A673 (cell line): ENCODE measurements at regions of chr2 and their contacts with region 1.

Region 1: GRCh38 chr2:24827321-24828237 is 34.4 kb downstream of the CENPO start:
- DNase-seq: peak; percentile 90
- H3K4me3 ChIP-seq: no peak overlapping the region
- H3K27ac ChIP-seq: no peak overlapping the region
- H3K4me1 ChIP-seq: peaks cover under 1% of the 10 kb centered on the region
- H3K27me3 ChIP-seq: no peaks in the 10 kb centered on the region
- CTCF ChIP-seq: peak; percentile 96

Region 2: GRCh38 chr2:24409700-24410556 is 417.7 kb before region 1 on chr2:
- CTCF ChIA-PET with region 1: interaction called, 4 read pairs
- POLR2A ChIA-PET with region 1: no interaction called
- intact Hi-C with region 1: loop called (anchors 1 kb)
- DNase-seq: peak; percentile 83
- H3K4me3 ChIP-seq: no peak overlapping the region
- H3K27ac ChIP-seq: no peak overlapping the region
- H3K4me1 ChIP-seq: peaks cover 3% of the 10 kb centered on the region
- H3K27me3 ChIP-seq: no peaks in the 10 kb centered on the region
- CTCF ChIP-seq: peak; percentile 87

Region 3: DNA sequence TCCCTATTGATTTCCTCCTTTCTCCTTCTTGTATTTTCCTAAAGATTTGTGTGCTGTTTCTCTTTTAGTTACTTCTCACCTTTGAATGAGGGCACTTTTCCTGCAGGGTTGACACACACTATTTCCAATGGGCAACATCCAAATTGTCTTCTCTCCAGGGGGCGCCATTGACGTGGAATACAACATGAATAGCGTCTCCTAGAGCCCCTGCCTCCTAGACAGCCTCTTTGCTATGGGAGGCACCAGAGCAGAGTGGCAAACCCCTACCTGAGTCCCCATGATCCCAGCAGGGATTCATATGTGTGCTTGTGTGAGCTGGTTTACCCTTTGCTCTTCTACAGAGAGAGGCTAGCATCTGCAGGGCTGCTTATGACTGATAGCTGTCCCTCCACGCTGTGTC is 405.9 kb before region 1 on chr2:
- CTCF ChIA-PET with region 1: interaction called, 9 read pairs
- POLR2A ChIA-PET with region 1: no interaction called
- intact Hi-C with region 1: loop called (anchors 1 kb)
- DNase-seq: peak; percentile 84
- H3K4me3 ChIP-seq: no peak overlapping the region
- H3K27ac ChIP-seq: no peak overlapping the region
- H3K4me1 ChIP-seq: peaks cover 5% of the 10 kb centered on the region
- H3K27me3 ChIP-seq: no peaks in the 10 kb centered on the region
- CTCF ChIP-seq: peak; percentile 85

Region 4: GRCh38 chr2:24490674-24491625 is 336.6 kb before region 1 on chr2 and contains the start of gene NCOA1:
- CTCF ChIA-PET with region 1: interaction called, 11 read pairs
- POLR2A ChIA-PET with region 1: no interaction called
- intact Hi-C with region 1: loop called (anchors 10 kb)
- DNase-seq: peak; percentile 96
- H3K4me3 ChIP-seq: peak within 1 kb of the TSS; percentile 84
- H3K27ac ChIP-seq: peak within 1 kb of the TSS; percentile 87
- H3K4me1 ChIP-seq: peaks cover 46% of the 10 kb centered on the region
- H3K27me3 ChIP-seq: no peaks in the 10 kb centered on the region
- CTCF ChIP-seq: no peak
- total RNA-seq, gene NCOA1: 27.5 TPM in 2 replicates

Region 5: DNA sequence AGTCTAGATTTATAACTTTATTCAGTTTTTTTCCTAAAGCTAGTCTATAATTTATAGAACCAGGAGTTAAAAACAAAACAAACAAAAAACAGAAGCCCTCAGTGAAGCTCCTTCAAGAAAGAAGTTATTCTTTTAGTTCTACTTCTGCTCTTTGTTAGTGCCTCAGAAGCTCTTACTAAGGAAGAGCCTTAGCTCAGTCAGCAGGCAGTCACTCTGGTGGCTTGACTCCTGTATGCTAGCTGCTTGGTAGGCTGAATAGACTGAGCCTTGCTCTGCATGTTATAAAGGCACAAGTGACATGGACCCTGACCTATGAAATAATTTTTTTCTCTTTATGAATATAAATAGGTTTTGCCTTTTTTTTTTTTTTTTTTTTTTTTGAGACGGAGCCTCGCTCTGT is 311.7 kb before region 1 on chr2:
- CTCF ChIA-PET with region 1: no interaction called
- POLR2A ChIA-PET with region 1: no interaction called
- intact Hi-C with region 1: no loop called
- DNase-seq: peak; percentile 16
- H3K4me3 ChIP-seq: no peak overlapping the region
- H3K27ac ChIP-seq: no peak overlapping the region
- H3K4me1 ChIP-seq: peaks cover 17% of the 10 kb centered on the region
- H3K27me3 ChIP-seq: no peaks in the 10 kb centered on the region
- CTCF ChIP-seq: no peak

Region 6: GRCh38 chr2:24613154-24613814 is 214.3 kb before region 1 on chr2:
- CTCF ChIA-PET with region 1: interaction called, 4 read pairs
- POLR2A ChIA-PET with region 1: no interaction called
- intact Hi-C with region 1: loop called (anchors 2 kb)
- DNase-seq: peak; percentile 71
- H3K4me3 ChIP-seq: no peak overlapping the region
- H3K27ac ChIP-seq: no peak overlapping the region
- H3K4me1 ChIP-seq: peaks cover 18% of the 10 kb centered on the region
- H3K27me3 ChIP-seq: no peaks in the 10 kb centered on the region
- CTCF ChIP-seq: peak; percentile 67

Region 7: DNA sequence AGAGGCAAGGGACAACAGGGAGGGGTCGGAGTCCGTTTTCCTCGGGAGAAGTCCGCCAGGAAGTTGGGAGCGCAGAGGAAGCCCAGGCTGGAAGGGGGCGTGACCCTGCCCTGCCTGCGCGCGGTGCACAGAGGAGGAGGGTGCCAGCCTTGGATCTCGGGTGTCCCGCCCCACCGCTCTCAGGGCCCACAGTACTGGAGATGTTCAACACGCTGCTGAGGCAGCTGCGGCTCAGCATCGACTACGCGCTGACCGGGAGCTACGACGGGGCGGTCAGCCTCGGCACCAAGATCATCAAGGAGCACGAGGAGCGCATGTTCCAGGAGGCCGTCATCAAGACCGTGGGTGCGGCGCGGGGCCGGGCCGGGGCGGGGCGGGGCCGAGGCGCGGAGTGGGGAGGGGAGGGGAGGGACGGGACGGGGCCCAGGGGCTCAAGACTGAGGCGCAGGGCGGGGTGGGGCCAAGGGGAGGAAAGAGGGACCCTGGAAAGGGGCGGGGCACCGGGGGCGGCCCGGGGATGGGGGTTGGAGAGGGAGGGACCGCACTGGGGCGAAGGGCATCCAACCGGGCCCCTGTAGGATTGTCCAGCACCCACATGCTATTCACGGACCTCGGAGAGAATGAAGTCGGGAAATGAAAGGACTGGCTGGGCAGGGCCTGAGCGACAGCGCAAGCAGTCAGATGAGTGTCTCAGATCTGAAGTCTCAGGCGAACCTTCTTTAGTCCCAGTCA is 304.2 kb after region 1 on chr2:
- CTCF ChIA-PET with region 1: interaction called, 6 read pairs
- POLR2A ChIA-PET with region 1: no interaction called
- intact Hi-C with region 1: loop called (anchors 10 kb)
- DNase-seq: no peak
- H3K4me3 ChIP-seq: no peak overlapping the region
- H3K27ac ChIP-seq: no peak overlapping the region
- H3K4me1 ChIP-seq: no peaks in the 10 kb centered on the region
- H3K27me3 ChIP-seq: peaks cover 28% of the 10 kb centered on the region
- CTCF ChIP-seq: no peak